ENCODE measurements at regions of chr2 and their contacts with region 1.

Region 1: GRCh38 chr2:166314022-166314759 is 61.6 kb downstream of the SCN9A start:
- DNase-seq: no peak
- H3K4me3 ChIP-seq: no peak overlapping the region
- H3K4me3 Mint-ChIP-seq: no peak overlapping the region
- H3K27ac Mint-ChIP-seq: no peak overlapping the region
- H3K4me1 ChIP-seq: no peaks in the 10 kb centered on the region
- H3K4me1 Mint-ChIP-seq: no peaks in the 10 kb centered on the region
- H3K27me3 ChIP-seq: no peaks in the 10 kb centered on the region
- H3K27me3 Mint-ChIP-seq: no peaks in the 10 kb centered on the region
- CTCF ChIP-seq: no peak

Region 2: DNA sequence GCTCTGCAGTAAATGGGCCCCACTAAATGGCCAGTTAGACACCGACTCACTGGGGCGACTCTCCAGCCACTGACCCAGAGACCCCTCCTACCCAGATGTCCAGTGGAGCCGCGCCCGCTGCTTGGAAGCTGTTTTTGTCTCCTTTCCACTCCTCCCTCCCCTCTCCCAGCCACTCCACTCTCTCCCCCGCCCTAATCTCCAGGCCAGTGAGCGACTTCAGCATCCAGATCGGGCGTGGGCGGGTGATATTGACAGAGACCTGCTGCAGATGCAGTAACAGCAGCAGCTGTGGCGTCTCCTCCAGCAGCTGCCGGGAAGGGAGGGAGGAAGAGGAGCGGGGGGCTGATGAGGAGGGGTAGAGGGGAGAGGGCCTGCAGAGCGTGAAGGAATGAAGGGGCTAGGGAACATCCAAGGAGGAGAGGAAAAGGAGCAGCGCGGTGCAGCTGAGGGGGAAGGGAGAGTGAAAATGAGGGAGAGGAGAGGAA is 180.0 kb after region 1 on chr2 and contains the start of gene SCN7A:
- CTCF ChIA-PET with region 1: no interaction called
- POLR2A ChIA-PET with region 1: no interaction called
- intact Hi-C with region 1: loop called (anchors 5 kb)
- DNase-seq: peak; percentile 39 to 58
- H3K4me3 ChIP-seq: no peak within 1 kb of the TSS
- H3K4me3 Mint-ChIP-seq: peak within 1 kb of the TSS; percentile 66
- H3K27ac Mint-ChIP-seq: no peak within 1 kb of the TSS
- H3K4me1 ChIP-seq: peaks cover 7% of the 10 kb centered on the region
- H3K4me1 Mint-ChIP-seq: peaks cover 7% of the 10 kb centered on the region
- H3K27me3 ChIP-seq: no peaks in the 10 kb centered on the region
- H3K27me3 Mint-ChIP-seq: peaks cover 4% of the 10 kb centered on the region
- CTCF ChIP-seq: no peak
- total RNA-seq, gene SCN7A: 0.23 and 0.27 TPM in 2 replicates

Region 3: DNA sequence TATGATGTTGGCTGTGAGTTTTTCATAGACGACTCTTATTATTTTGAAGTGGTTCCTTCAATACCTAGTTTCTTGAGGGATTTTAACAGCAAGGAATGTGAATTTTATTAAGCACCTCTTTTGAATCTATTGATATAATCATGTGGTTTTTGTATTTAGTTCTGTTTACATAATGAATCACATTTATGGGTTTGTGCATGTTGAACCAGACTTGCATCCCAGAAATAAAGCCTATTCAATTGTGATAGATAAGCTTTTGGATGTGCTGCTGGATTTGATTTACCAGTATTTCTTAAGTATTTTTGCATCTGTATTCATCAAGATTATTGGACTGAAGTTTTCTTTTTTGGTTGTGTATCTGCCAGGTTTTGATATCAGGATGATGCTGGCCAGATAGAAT is 311.5 kb after region 1 on chr2:
- CTCF ChIA-PET with region 1: no interaction called
- POLR2A ChIA-PET with region 1: no interaction called
- intact Hi-C with region 1: no loop called
- DNase-seq: no peak
- H3K4me3 ChIP-seq: no peak overlapping the region
- H3K4me3 Mint-ChIP-seq: no peak overlapping the region
- H3K27ac Mint-ChIP-seq: no peak overlapping the region
- H3K4me1 ChIP-seq: peaks cover 4% of the 10 kb centered on the region; the same call in 1 of the 2 replicates
- H3K4me1 Mint-ChIP-seq: no peaks in the 10 kb centered on the region
- H3K27me3 ChIP-seq: no peaks in the 10 kb centered on the region
- H3K27me3 Mint-ChIP-seq: no peaks in the 10 kb centered on the region
- CTCF ChIP-seq: no peak